Activated CD4-positive, alpha-beta memory T cell treated with anti-CD3 and anti-CD28 coated beads for 36 hours (primary cell): ENCODE measurements at regions of chr6 and their contacts with region 1.

Region 1: GRCh38 chr6:12011276-12012076 is 636 bp upstream of the HIVEP1 start:
- DNase-seq: peak; percentile 99
- H3K4me3 Mint-ChIP-seq: peak overlapping the region; percentile 90
- H3K27ac Mint-ChIP-seq: peak overlapping the region; percentile 99
- H3K4me1 Mint-ChIP-seq: peaks cover 46% of the 10 kb centered on the region
- H3K27me3 Mint-ChIP-seq: no peaks in the 10 kb centered on the region

Region 2: GRCh38 chr6:11537229-11538051 is 474.0 kb before region 1 on chr6 and contains the start of gene TMEM170B:
- CTCF ChIA-PET with region 1: no interaction called
- POLR2A ChIA-PET with region 1: no interaction called
- intact Hi-C with region 1: loop called (anchors 1 kb)
- DNase-seq: peak; percentile 94
- H3K4me3 Mint-ChIP-seq: peak within 1 kb of the TSS; percentile 73
- H3K27ac Mint-ChIP-seq: no peak within 1 kb of the TSS
- H3K4me1 Mint-ChIP-seq: peaks cover 9% of the 10 kb centered on the region
- H3K27me3 Mint-ChIP-seq: peaks cover 14% of the 10 kb centered on the region
- total RNA-seq, gene TMEM170B: 0.83 to 1.1 TPM

Region 3: GRCh38 chr6:11732036-11732631 is 279.3 kb before region 1 on chr6:
- CTCF ChIA-PET with region 1: no interaction called
- POLR2A ChIA-PET with region 1: interaction called, 10 read pairs
- intact Hi-C with region 1: loop called (anchors 1 kb)
- DNase-seq: peak; percentile 85
- H3K4me3 Mint-ChIP-seq: peak overlapping the region; percentile 20
- H3K27ac Mint-ChIP-seq: peak overlapping the region; percentile 96
- H3K4me1 Mint-ChIP-seq: peaks cover 64% of the 10 kb centered on the region
- H3K27me3 Mint-ChIP-seq: no peaks in the 10 kb centered on the region

Region 4: GRCh38 chr6:11785774-11786579 is 225.5 kb before region 1 on chr6:
- CTCF ChIA-PET with region 1: interaction called, 3 read pairs
- POLR2A ChIA-PET with region 1: no interaction called
- intact Hi-C with region 1: loop called (anchors 5 kb)
- DNase-seq: peak; percentile 80
- H3K4me3 Mint-ChIP-seq: peak overlapping the region; percentile 70
- H3K27ac Mint-ChIP-seq: peak overlapping the region; percentile 75
- H3K4me1 Mint-ChIP-seq: peaks cover 10% of the 10 kb centered on the region
- H3K27me3 Mint-ChIP-seq: peaks cover 10% of the 10 kb centered on the region

Region 5: GRCh38 chr6:12051861-12052368 is 40.4 kb after region 1 on chr6:
- CTCF ChIA-PET with region 1: interaction called, 6 read pairs
- POLR2A ChIA-PET with region 1: interaction called, 10 read pairs
- intact Hi-C with region 1: loop called (anchors 1 kb)
- DNase-seq: peak; percentile 78
- H3K4me3 Mint-ChIP-seq: peak overlapping the region; percentile 13
- H3K27ac Mint-ChIP-seq: peak overlapping the region; percentile 84
- H3K4me1 Mint-ChIP-seq: peaks cover 73% of the 10 kb centered on the region
- H3K27me3 Mint-ChIP-seq: no peaks in the 10 kb centered on the region

Region 6: DNA sequence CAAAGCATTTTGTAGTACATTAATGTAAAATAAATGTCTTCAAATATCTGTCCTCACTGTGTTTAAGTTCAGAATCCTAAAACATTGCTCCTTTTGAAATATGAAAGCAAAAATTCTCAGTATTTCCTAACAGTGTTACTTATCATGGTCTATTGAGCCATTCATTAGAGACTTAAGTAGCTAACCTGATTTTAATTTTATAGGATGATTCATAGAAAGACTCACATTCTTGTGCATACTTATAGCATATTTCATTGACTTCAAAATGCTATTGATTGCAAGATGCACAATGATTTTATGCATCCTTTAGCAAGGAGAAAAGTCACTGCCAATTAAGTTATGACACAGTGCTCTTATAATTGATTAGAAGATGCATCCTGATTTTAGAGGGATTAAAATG is 86.3 kb after region 1 on chr6:
- CTCF ChIA-PET with region 1: no interaction called
- POLR2A ChIA-PET with region 1: no interaction called
- intact Hi-C with region 1: no loop called
- DNase-seq: no peak
- H3K4me3 Mint-ChIP-seq: no peak overlapping the region
- H3K27ac Mint-ChIP-seq: no peak overlapping the region
- H3K4me1 Mint-ChIP-seq: peaks cover 30% of the 10 kb centered on the region
- H3K27me3 Mint-ChIP-seq: no peaks in the 10 kb centered on the region

Region 7: GRCh38 chr6:12119085-12119588 is 107.7 kb after region 1 on chr6:
- CTCF ChIA-PET with region 1: no interaction called
- POLR2A ChIA-PET with region 1: interaction called, 4 read pairs
- intact Hi-C with region 1: loop called (anchors 2 kb)
- DNase-seq: peak; percentile 66
- H3K4me3 Mint-ChIP-seq: no peak overlapping the region
- H3K27ac Mint-ChIP-seq: peak overlapping the region; percentile 85
- H3K4me1 Mint-ChIP-seq: peaks cover 49% of the 10 kb centered on the region
- H3K27me3 Mint-ChIP-seq: no peaks in the 10 kb centered on the region

Region 8: GRCh38 chr6:12150812-12151432 is 139.4 kb after region 1 on chr6:
- CTCF ChIA-PET with region 1: no interaction called
- POLR2A ChIA-PET with region 1: no interaction called
- intact Hi-C with region 1: no loop called
- DNase-seq: peak; percentile 49
- H3K4me3 Mint-ChIP-seq: no peak overlapping the region
- H3K27ac Mint-ChIP-seq: no peak overlapping the region
- H3K4me1 Mint-ChIP-seq: peaks cover 15% of the 10 kb centered on the region
- H3K27me3 Mint-ChIP-seq: no peaks in the 10 kb centered on the region